ENCODE measurements at regions of chr12 and their contacts with region 1.

Region 1: GRCh38 chr12:70590051-70590450 is 47.2 kb downstream of the PTPRB start:
- DNase-seq: peak; percentile 83
- H3K4me3 Mint-ChIP-seq: no peak overlapping the region
- H3K27ac Mint-ChIP-seq: no peak overlapping the region
- H3K4me1 Mint-ChIP-seq: no peaks in the 10 kb centered on the region
- H3K27me3 Mint-ChIP-seq: no peaks in the 10 kb centered on the region
- CTCF ChIP-seq: peak; percentile 78

Region 2: DNA sequence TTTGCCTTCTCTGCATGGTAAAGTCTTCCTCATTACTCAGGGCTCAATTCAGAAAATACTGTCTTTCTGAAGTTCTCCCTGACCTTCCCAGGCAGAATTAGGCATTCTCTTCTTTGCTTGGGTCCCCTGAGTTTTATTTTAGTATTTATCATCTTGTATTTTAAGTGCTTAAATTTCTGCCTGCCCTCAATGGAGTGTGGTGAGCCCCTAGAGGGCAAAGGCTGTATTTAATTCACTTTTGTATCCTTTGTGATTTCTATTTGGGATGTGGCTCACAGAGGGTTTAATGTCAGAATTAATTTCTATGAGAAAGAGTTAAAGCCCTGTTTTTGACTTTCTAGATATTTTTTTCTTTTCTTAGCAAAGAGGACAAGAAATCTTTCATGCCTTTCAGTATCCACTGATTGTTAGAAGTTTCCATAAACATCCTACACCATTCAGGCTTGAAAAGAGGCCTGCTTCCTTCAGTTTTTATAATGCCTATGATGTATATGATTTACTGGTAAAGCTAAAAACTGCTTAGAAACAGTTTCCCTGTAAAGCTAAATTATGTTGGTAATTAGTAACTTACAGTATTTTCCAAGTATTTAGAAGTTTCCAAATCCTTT is 102.7 kb after region 1 on chr12:
- CTCF ChIA-PET with region 1: interaction called, 6 read pairs
- POLR2A ChIA-PET with region 1: no interaction called
- intact Hi-C with region 1: loop called (anchors 1 kb)
- DNase-seq: peak; percentile 37
- H3K4me3 Mint-ChIP-seq: no peak overlapping the region
- H3K27ac Mint-ChIP-seq: no peak overlapping the region
- H3K4me1 Mint-ChIP-seq: no peaks in the 10 kb centered on the region
- H3K27me3 Mint-ChIP-seq: no peaks in the 10 kb centered on the region
- CTCF ChIP-seq: peak; percentile 46

Region 3: DNA sequence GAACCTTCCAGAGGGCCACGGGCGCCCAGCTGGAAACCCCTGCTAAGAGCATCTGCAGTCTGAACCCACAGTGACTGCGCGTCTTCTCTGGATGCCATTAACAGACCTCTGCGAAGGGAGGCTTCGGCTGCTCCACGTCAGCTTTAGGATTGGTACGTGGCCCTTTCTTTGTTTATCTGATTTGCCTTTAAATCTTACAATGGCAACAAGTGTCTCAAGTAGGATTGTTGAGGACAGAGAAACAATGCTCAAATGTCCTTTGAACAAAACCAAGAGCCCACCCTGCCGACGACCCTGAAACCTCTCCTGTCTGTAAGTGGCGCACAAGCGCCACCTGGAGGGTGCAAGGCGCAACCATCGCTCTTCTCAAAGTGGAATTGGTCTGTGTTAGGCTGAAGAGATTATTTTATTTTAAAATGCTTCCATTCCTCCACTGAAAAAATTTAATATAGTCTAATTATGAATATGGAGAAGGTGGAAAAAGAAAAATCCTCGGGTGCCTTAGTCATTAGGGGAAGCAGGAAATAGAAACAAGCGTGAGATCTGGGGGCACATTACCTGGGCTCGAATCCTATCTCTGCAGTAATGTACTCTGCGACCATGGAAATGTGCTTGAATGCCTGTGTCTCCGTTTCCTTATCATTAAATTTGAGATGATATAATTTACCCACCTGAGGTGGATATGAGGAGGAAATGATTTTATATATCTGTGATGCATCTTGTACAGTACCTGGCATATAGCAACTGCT is 129.8 kb after region 1 on chr12:
- CTCF ChIA-PET with region 1: interaction called, 26 read pairs
- POLR2A ChIA-PET with region 1: no interaction called
- intact Hi-C with region 1: loop called (anchors 1 kb)
- DNase-seq: peak; percentile 28
- H3K4me3 Mint-ChIP-seq: no peak overlapping the region
- H3K27ac Mint-ChIP-seq: no peak overlapping the region
- H3K4me1 Mint-ChIP-seq: no peaks in the 10 kb centered on the region
- H3K27me3 Mint-ChIP-seq: no peaks in the 10 kb centered on the region
- CTCF ChIP-seq: peak; percentile 92

Region 4: GRCh38 chr12:70849265-70849960 is 259.4 kb after region 1 on chr12:
- CTCF ChIA-PET with region 1: interaction called, 3 read pairs
- POLR2A ChIA-PET with region 1: no interaction called
- intact Hi-C with region 1: loop called (anchors 5 kb)
- DNase-seq: peak; percentile 60
- H3K4me3 Mint-ChIP-seq: no peak overlapping the region
- H3K27ac Mint-ChIP-seq: peak overlapping the region; percentile 82
- H3K4me1 Mint-ChIP-seq: peaks cover 35% of the 10 kb centered on the region
- H3K27me3 Mint-ChIP-seq: no peaks in the 10 kb centered on the region
- CTCF ChIP-seq: peak; percentile 30

Region 5: DNA sequence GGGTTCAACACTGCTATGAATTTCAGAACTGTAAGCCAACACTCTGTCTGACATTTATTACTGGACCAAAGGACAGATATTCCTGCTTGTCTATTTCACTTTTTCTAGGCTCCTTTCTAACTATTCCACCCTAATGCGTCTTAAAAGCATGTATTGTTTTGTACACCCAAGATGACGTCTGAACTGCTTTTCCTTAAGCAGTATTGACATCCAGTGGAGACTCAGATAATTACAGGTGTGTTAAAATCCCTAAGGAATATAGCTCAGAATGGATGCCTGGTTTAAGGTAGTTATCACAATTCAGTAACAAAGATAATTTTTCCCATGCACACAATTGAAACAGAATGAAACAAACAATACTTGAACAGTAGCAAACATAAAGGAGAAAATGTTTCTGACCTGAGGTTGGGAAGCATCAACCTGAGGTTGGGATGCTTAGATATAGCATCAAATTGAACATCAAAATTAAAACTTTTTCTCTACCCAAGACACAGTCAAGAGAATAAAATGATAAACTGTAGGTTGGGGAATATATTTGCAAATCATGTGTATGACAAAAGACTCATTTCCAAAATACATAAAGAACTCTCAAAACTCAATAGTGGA is 424.2 kb after region 1 on chr12:
- CTCF ChIA-PET with region 1: interaction called, 3 read pairs
- POLR2A ChIA-PET with region 1: no interaction called
- intact Hi-C with region 1: loop called (anchors 1 kb)
- DNase-seq: peak; percentile 77
- H3K4me3 Mint-ChIP-seq: peak overlapping the region; percentile 46
- H3K27ac Mint-ChIP-seq: peak overlapping the region; percentile 68
- H3K4me1 Mint-ChIP-seq: peaks cover 11% of the 10 kb centered on the region
- H3K27me3 Mint-ChIP-seq: no peaks in the 10 kb centered on the region
- CTCF ChIP-seq: peak; percentile 81

Region 6: DNA sequence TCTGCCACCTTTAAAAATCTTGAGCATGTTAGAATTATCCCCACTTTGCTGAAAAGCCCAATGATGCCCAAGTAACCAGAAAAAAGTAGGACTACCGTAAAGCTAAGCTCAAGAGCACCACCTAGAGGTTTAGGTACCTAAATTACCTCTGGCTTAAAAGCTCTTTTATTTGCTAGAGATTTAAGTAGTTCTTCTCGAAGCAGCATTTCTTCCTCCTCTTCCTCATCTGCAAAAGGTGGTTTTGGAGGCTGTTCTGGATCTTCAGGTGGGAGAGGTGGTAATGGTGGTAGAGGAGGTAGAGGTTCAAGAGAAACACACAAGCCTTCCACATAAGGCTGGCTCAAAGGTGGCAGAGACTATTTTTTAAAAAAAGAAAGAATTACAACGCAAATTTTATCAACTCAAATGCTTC is 1046.7 kb after region 1 on chr12:
- CTCF ChIA-PET with region 1: no interaction called
- POLR2A ChIA-PET with region 1: no interaction called
- intact Hi-C with region 1: no loop called
- DNase-seq: peak; percentile 70
- H3K4me3 Mint-ChIP-seq: no peak overlapping the region
- H3K27ac Mint-ChIP-seq: no peak overlapping the region
- H3K4me1 Mint-ChIP-seq: peaks cover 6% of the 10 kb centered on the region
- H3K27me3 Mint-ChIP-seq: no peaks in the 10 kb centered on the region
- CTCF ChIP-seq: peak; percentile 66